ENCODE measurements at regions of chr17 and their contacts with region 1.

Region 1: GRCh38 chr17:42484304-42484703 is 25.6 kb downstream of the ATP6V0A1 start:
- DNase-seq: peak; percentile 41
- H3K4me3 ChIP-seq: no peak overlapping the region
- H3K27ac ChIP-seq: no peak overlapping the region
- H3K4me1 ChIP-seq: no peaks in the 10 kb centered on the region
- H3K27me3 ChIP-seq: no peaks in the 10 kb centered on the region
- CTCF ChIP-seq: no peak

Region 2: DNA sequence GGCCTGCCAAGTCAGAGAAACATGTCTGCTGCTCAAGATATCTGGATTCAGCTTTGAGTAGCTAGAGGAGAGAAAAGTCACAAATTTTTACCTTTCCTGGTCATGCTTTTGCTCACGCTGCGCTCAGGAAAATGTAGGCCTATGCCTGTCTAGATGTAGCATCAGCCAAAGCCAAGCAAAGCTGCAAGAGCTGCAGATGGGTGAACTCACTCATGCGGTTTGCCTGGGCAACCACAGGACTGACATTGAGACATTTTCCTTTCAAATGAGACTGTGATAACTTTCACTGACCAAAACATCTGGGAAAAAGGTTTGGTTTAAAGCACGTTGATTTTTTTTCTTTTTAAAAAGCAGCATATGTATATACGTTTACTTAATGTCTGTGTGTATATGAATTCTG is 17.8 kb after region 1 on chr17:
- intact Hi-C with region 1: loop called (anchors 2 kb)
- DNase-seq: no peak
- H3K4me3 ChIP-seq: no peak overlapping the region
- H3K27ac ChIP-seq: no peak overlapping the region
- H3K4me1 ChIP-seq: no peaks in the 10 kb centered on the region
- H3K27me3 ChIP-seq: no peaks in the 10 kb centered on the region
- CTCF ChIP-seq: no peak

Region 3: DNA sequence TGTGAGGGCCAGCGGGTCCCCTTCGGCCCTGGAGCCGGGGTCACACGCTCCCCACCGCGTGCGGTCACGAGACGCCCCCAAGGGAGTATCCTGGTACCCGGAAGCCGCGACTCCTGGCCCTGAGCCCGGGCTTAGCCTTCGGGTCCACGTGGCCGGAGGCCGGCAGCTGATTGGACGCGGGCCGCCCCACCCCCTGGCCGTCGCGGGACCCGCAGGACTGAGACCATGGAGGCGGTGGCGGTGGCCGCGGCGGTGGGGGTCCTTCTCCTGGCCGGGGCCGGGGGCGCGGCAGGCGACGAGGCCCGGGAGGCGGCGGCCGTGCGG is 51.7 kb after region 1 on chr17 and contains the start of gene NAGLU:
- intact Hi-C with region 1: no loop called
- DNase-seq: peak; percentile 98
- H3K4me3 ChIP-seq: peak within 1 kb of the TSS; percentile 67
- H3K27ac ChIP-seq: peak within 1 kb of the TSS; percentile 66
- H3K4me1 ChIP-seq: peaks cover 7% of the 10 kb centered on the region
- H3K27me3 ChIP-seq: no peaks in the 10 kb centered on the region
- CTCF ChIP-seq: no peak
- total RNA-seq, gene NAGLU: 27.8 to 38.6 TPM

Region 4: GRCh38 chr17:42598905-42599304 is 114.6 kb after region 1 on chr17:
- intact Hi-C with region 1: no loop called
- DNase-seq: no peak
- H3K4me3 ChIP-seq: no peak overlapping the region
- H3K27ac ChIP-seq: no peak overlapping the region
- H3K4me1 ChIP-seq: no peaks in the 10 kb centered on the region
- H3K27me3 ChIP-seq: no peaks in the 10 kb centered on the region
- CTCF ChIP-seq: no peak